Dendritic cell treated with granulocyte-macrophage colony-stimulating factor and Interleukin-4, amounts not matched to agents 40 ng/mL and 50 ng/mL, for 4 days (primary cell): ENCODE measurements at regions of chr13 and their contacts with region 1.

Region 1: GRCh38 chr13:80342471-80343380 is 1.8 kb upstream of the SPRY2 start:
- H3K4me3 Mint-ChIP-seq: peak overlapping the region; percentile 84
- H3K27ac Mint-ChIP-seq: peak overlapping the region; percentile 59
- H3K4me1 Mint-ChIP-seq: peaks cover 24% of the 10 kb centered on the region
- H3K27me3 Mint-ChIP-seq: peaks cover 27% of the 10 kb centered on the region

Region 2: GRCh38 chr13:79973533-79973963 is 369.2 kb before region 1 on chr13:
- intact Hi-C with region 1: loop called (anchors 10 kb)
- H3K4me3 Mint-ChIP-seq: no peak overlapping the region
- H3K27ac Mint-ChIP-seq: no peak overlapping the region
- H3K4me1 Mint-ChIP-seq: no peaks in the 10 kb centered on the region
- H3K27me3 Mint-ChIP-seq: peaks cover 2% of the 10 kb centered on the region

Region 3: GRCh38 chr13:80037505-80037888 is 305.2 kb before region 1 on chr13:
- intact Hi-C with region 1: loop called (anchors 5 kb)
- H3K4me3 Mint-ChIP-seq: no peak overlapping the region
- H3K27ac Mint-ChIP-seq: no peak overlapping the region
- H3K4me1 Mint-ChIP-seq: peaks cover 52% of the 10 kb centered on the region
- H3K27me3 Mint-ChIP-seq: no peaks in the 10 kb centered on the region

Region 4: DNA sequence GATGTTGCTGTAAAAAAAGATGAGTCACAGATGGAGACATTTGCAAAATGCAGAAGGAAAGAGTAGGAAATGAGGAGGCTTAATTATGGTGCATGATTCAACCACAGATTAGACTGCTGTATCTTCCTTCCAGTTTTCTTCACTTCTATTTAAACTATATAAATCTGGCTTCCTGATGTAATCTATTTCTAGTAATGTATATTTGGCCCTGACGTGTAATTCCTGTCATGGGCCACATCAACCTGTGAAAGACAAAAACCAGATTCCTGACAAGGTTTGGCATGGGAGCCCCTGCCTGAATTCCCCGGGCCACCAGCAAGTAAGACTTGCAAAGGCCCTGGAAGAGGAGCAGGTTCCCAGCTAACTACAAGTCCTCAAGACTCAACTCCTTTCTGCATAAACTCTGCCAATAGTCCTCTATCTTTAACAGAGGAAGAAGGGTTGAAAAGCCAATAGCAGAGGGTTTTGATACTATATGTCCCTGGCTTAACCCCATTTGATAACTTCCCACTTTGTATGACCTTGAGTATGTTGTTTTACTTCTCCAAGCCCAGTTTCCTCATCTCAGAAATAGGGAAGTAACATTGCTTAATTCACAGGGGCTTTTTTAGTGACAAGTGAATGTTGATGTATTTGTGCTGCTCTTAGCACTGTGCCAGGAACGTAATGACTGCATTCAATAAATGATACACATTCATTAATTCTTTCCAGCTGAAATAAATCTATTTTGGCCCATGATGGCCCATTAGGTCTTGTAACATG is 174.5 kb before region 1 on chr13:
- intact Hi-C with region 1: loop called (anchors 1 kb)
- H3K4me3 Mint-ChIP-seq: no peak overlapping the region
- H3K27ac Mint-ChIP-seq: peak overlapping the region; percentile 84
- H3K4me1 Mint-ChIP-seq: peaks cover 53% of the 10 kb centered on the region
- H3K27me3 Mint-ChIP-seq: peaks cover 31% of the 10 kb centered on the region

Region 5: DNA sequence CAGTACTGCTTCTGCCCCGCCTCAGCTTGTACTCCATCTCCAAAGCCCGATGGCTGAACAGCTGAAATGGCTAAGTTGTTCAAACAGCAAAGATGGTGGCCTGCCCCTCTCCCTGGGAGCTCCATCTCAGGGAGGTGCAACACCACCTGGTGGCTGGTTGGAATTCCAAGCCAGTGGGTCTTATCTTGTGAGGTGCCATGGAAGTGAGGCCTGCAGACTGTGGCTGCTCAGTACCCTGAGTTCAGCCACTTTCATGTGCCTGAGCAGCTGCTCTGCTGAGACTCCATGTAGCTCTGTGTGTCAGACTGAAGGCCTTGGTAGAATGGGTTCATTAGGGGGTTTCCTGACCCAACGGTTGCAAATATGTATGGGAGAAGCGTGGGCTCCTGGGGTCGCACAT is 65.5 kb after region 1 on chr13:
- intact Hi-C with region 1: no loop called
- H3K4me3 Mint-ChIP-seq: no peak overlapping the region
- H3K27ac Mint-ChIP-seq: no peak overlapping the region
- H3K4me1 Mint-ChIP-seq: no peaks in the 10 kb centered on the region
- H3K27me3 Mint-ChIP-seq: no peaks in the 10 kb centered on the region

Region 6: GRCh38 chr13:80454245-80454644 is 111.5 kb after region 1 on chr13:
- intact Hi-C with region 1: loop called (anchors 5 kb)
- H3K4me3 Mint-ChIP-seq: no peak overlapping the region
- H3K27ac Mint-ChIP-seq: no peak overlapping the region
- H3K4me1 Mint-ChIP-seq: peaks cover 51% of the 10 kb centered on the region
- H3K27me3 Mint-ChIP-seq: peaks cover 88% of the 10 kb centered on the region

Region 7: GRCh38 chr13:81017513-81018152 is 674.9 kb after region 1 on chr13:
- intact Hi-C with region 1: loop called (anchors 10 kb)
- H3K4me3 Mint-ChIP-seq: no peak overlapping the region
- H3K27ac Mint-ChIP-seq: no peak overlapping the region
- H3K4me1 Mint-ChIP-seq: no peaks in the 10 kb centered on the region
- H3K27me3 Mint-ChIP-seq: no peaks in the 10 kb centered on the region